ENCODE measurements at regions of chr1 and their contacts with region 1.

Region 1: DNA sequence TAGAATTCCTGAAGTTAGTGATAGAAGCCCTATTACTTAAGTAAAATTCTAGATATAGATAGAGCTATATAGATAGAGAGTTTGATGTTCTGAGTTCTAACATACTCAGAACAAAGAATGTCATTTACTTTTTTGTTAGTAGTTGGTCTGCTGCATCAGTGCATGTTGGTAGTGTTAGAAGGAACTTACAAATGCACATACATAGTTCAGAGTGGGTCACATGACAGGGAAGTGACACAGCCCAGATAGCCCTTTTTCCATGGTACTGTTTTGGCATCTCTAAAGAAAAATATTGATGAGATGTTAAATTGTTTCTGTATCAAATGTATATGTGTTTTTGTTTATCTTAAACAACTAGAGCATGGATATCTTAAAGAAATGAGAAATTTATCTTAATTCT is 45.7 kb downstream of the DHX9 start:
- DNase-seq: no peak
- ATAC-seq: no peak
- H3K4me3 ChIP-seq: no peak overlapping the region
- H3K27ac ChIP-seq: no peak overlapping the region
- H3K4me1 ChIP-seq: no peaks in the 10 kb centered on the region
- H3K27me3 ChIP-seq: no peaks in the 10 kb centered on the region
- CTCF ChIP-seq: no peak

Region 2: GRCh38 chr1:182015360-182015759 is 869.5 kb before region 1 on chr1:
- intact Hi-C with region 1: no loop called
- DNase-seq: no peak
- ATAC-seq: no peak
- H3K4me3 ChIP-seq: no peak overlapping the region
- H3K27ac ChIP-seq: no peak overlapping the region
- H3K4me1 ChIP-seq: no peaks in the 10 kb centered on the region
- H3K27me3 ChIP-seq: no peaks in the 10 kb centered on the region
- CTCF ChIP-seq: no peak

Region 3: DNA sequence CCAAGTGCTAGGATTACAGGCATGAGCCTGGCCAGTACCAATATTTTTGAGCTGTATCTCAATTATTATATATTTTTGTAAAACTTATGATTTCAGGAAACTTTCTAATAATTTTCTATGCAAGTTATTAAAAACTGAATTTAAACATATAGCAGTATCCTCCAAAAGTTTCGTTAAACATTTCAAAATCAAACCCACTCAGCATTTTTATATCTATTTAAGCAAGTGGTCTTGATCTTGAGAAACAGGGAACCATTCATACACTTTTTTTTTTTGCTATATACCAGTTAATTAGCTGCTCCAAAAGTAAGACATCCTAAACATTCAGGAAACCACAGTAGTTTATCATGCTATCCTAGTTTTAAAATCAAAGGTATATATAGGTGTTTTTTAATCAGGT is 46.1 kb after region 1 on chr1:
- intact Hi-C with region 1: no loop called
- DNase-seq: no peak
- ATAC-seq: no peak
- H3K4me3 ChIP-seq: no peak overlapping the region
- H3K27ac ChIP-seq: no peak overlapping the region
- H3K4me1 ChIP-seq: no peaks in the 10 kb centered on the region
- H3K27me3 ChIP-seq: no peaks in the 10 kb centered on the region
- CTCF ChIP-seq: no peak

Region 4: DNA sequence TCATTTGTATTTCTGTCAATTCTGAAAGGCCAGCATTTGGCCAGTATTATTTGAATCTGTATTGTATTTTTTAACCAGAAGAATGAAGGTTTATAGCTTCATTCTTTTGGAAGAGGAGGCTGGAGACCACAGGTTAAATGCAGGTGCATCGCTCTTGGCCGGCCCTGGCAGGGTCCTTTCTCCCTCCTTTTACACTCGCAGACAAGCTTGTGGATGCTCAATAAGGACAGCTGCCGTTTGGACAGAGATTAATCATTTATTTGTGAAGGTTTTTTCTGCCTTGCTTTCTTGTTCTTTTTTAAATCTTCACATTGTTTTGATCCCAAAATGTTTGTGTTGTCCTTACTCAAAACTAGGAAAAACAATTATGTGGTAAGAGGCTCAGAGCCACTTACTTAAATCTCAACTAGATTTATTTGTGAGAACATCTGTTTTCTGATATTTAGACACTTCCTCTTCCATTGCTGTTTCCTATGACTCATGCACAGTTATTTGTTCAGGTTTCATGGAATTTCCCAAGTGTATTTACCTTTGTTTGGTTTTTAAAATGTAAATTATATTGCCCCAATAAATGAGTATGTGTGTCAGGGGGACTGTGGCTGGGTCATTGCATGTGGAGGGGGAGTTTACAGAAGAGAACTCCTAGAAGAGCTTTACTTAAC is 254.5 kb after region 1 on chr1:
- intact Hi-C with region 1: loop called in 1 of 2 experiments (anchors 5 kb)
- DNase-seq: no peak
- ATAC-seq: peak in 1 of 4 donors; percentile 37
- H3K4me3 ChIP-seq: no peak overlapping the region
- H3K27ac ChIP-seq: peak overlapping the region; percentile 37
- H3K4me1 ChIP-seq: peaks cover 8% of the 10 kb centered on the region
- H3K27me3 ChIP-seq: no peaks in the 10 kb centered on the region
- CTCF ChIP-seq: no peak